BJ (cell line): ENCODE measurements at regions of chr15 and their contacts with region 1.

Region 1: GRCh38 chr15:73927476-73928240 is 1.4 kb downstream of the LOXL1 start:
- DNase-seq: no peak
- H3K4me3 ChIP-seq: peak overlapping the region; percentile 59
- H3K27me3 ChIP-seq: no peaks in the 10 kb centered on the region
- CTCF ChIP-seq: peak; percentile 68

Region 2: GRCh38 chr15:73822998-73823397 is 104.7 kb before region 1 on chr15:
- CTCF ChIA-PET with region 1: no interaction called
- POLR2A ChIA-PET with region 1: no interaction called
- DNase-seq: no peak
- H3K4me3 ChIP-seq: no peak overlapping the region
- H3K27me3 ChIP-seq: peaks cover 7% of the 10 kb centered on the region
- CTCF ChIP-seq: no peak

Region 3: DNA sequence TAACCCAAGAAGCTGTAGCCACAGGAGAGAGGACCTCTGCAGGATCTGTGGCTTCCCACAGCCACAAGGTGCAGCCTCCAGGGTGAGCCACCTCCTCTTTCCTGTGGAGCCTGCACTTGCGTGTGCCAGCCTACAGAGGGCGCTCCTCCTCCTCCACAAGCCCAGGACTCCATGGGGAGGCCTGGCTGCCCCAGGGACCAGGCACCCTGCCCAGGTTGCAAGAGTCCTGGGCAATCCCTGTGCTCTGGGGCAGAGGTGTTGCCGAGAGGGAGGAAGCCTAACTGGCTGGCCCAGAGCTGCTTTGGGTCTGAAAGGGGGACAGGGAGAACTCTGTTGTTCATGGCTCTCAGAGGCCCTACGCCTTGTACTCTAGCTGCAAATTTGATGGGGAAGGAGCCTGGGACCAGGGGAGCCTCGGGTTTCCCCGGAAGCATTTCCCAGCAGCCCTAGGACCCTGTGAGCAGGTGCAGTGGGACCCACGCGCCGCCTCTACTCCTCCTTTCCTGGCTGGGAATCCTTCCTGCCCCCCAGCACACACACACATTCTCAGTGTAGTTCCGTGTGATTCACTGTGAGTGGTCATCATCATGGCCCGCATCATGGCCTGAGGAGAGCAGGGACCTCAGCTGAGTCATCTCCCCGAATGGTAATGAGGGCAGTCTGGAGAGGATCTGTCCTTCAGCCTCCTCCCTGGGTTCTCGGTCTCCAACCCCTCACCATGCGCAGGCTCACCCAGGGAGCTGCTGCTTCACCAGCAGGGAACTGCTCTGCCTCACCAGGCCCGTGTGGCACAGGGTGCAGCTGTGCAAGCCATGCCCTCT is 30.0 kb before region 1 on chr15:
- CTCF ChIA-PET with region 1: interaction called, 16 read pairs
- POLR2A ChIA-PET with region 1: no interaction called
- DNase-seq: peak; percentile 39
- H3K4me3 ChIP-seq: no peak overlapping the region
- H3K27me3 ChIP-seq: no peaks in the 10 kb centered on the region
- CTCF ChIP-seq: peak; percentile 97

Region 4: DNA sequence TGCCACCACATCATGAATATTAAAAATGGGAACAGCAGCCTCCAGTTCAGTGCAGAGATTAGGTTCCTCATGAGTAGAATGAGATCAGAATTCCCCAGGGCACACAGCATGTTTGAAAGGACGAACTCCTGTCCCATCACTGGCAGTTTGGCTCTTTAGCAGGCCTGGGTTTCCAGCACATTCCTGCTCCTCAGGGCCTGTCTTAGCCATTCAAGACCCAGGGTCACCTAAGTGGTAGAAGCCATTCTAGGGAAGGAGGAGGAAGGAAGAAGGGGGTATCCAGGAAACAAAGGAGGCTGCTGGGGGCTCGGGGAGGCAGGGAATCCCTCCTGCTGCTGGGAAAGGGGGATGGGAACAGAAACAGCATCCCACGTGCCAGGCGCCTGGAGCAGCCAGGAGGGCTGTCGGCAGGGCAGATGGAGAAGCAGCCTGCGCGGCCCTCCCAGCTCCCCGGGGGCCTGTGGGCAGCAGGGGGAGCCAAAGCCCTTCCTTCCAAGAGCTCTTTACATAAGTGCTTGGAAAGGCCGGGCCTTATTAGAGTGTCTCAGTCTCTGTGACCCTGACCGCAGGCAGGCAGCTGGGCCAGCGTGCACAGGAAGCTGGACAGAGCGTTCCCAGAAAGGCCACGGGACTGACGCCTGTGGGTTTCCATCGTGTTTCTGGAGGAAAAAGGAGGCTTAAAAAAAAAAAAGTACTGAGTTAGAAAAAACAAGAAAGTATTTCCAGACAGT is 23.3 kb after region 1 on chr15:
- CTCF ChIA-PET with region 1: interaction called, 15 read pairs
- POLR2A ChIA-PET with region 1: no interaction called
- DNase-seq: peak; percentile 93
- H3K4me3 ChIP-seq: no peak overlapping the region
- H3K27me3 ChIP-seq: no peaks in the 10 kb centered on the region
- CTCF ChIP-seq: peak; percentile 91

Region 5: DNA sequence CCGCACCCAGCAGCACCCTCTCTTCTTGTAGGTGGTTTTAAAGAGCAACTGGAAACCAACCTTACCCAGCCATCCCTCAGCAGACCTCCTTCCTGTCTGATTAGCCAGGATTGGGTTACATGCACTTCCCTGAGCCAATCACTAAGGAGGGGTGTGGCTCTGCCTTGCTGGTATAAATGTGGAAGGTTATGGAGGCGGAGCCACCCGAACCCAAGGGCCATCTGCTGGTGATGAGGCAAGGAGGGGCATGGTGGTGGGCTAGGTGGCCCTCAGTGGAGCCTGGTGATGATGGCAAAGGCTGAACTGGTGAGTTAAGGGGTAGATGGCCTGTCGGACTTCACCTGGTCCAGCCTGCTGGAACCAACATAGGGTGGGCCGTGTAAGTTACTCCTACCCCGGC is 348.3 kb after region 1 on chr15:
- CTCF ChIA-PET with region 1: no interaction called
- POLR2A ChIA-PET with region 1: no interaction called
- DNase-seq: no peak
- H3K4me3 ChIP-seq: no peak overlapping the region
- H3K27me3 ChIP-seq: peaks cover 5% of the 10 kb centered on the region
- CTCF ChIP-seq: no peak